ENCODE measurements at regions of chr12 and their contacts with region 1.

Region 1: DNA sequence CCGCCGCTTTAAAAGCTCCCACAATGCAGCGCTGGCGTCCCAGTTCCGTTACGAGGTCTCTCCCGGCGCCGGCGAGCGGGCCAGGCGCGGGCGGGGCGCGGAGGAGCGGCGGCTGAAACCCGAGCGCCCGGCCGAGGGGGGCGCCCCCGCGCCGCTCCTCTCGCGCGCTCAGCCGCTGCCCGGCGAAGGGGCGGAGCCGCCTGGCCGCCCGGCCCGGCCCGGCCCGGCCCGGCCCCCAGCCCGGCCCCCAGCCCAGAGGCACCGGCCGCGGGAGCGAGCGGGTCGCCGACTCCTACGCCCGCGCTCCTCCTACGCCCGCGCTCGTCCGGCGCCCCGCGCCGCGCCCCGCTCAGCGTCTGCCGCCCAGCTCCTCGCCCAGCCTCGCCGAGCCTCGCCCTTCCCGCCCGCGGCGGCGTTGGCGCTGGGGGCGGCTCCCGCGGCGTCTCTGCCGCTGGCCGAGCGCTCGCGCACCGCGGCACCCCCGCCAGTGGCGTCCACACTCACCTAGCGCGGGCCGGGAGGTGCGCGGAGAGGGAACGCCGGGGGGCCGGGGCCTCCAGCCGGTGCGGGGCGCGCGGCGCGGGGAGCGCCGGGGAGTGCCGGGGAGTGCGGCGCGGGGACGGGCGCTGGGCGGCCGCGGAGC is at the start of gene RASSF8:
- DNase-seq: peak; percentile 40 to 65
- ATAC-seq: peak; percentile 84 to 88
- H3K4me3 ChIP-seq: peak within 1 kb of the TSS; percentile 83 to 92 (median 89)
- H3K27ac ChIP-seq: peak within 1 kb of the TSS; percentile 86 to 95 (median 94)
- H3K4me1 ChIP-seq: peaks cover 24 to 34% of the 10 kb centered on the region in 2 donors
- H3K27me3 ChIP-seq: no peaks in the 10 kb centered on the region
- CTCF ChIP-seq: no peak
- POLR2A ChIP-seq: peak; percentile 83 to 90
- total RNA-seq, gene RASSF8: 23.6 to 36.8 (median 28.0) TPM

Region 2: GRCh38 chr12:26017484-26018206 is 59.1 kb after region 1 on chr12:
- in situ Hi-C with region 1: loop called in 2 of 4 experiments (anchors 5 kb)
- intact Hi-C with region 1: loop called (anchors 1 kb)
- DNase-seq: no peak
- ATAC-seq: no peak
- H3K4me3 ChIP-seq: no peak overlapping the region
- H3K27ac ChIP-seq: no peak overlapping the region
- H3K4me1 ChIP-seq: peaks cover 6 to 39% of the 10 kb centered on the region in 2 donors
- H3K27me3 ChIP-seq: no peaks in the 10 kb centered on the region
- CTCF ChIP-seq: peak; percentile 42 to 70 (median 57)
- POLR2A ChIP-seq: no peak

Region 3: GRCh38 chr12:26028953-26029735 is 70.6 kb after region 1 on chr12:
- in situ Hi-C with region 1: loop called in 1 of 4 experiments (anchors 5 kb)
- intact Hi-C with region 1: loop called (anchors 2 kb)
- DNase-seq: no peak
- ATAC-seq: peak; percentile 70 to 76
- H3K4me3 ChIP-seq: no peak overlapping the region
- H3K27ac ChIP-seq: peak overlapping the region in 1 of 4 donors; percentile 27
- H3K4me1 ChIP-seq: peaks cover 23 to 39% of the 10 kb centered on the region in 2 donors
- H3K27me3 ChIP-seq: no peaks in the 10 kb centered on the region
- CTCF ChIP-seq: peak; percentile 62 to 87 (median 68)
- POLR2A ChIP-seq: no peak

Region 4: GRCh38 chr12:26113853-26114719 is 155.5 kb after region 1 on chr12:
- in situ Hi-C with region 1: no loop called
- intact Hi-C with region 1: loop called (anchors 5 kb)
- DNase-seq: peak; percentile 94 to 98
- ATAC-seq: peak; percentile 53 to 63
- H3K4me3 ChIP-seq: peak overlapping the region; percentile 46 to 61 (median 50)
- H3K27ac ChIP-seq: peak overlapping the region; percentile 95 to 100 (median 97)
- H3K4me1 ChIP-seq: peaks cover 80 to 84% of the 10 kb centered on the region in 2 donors
- H3K27me3 ChIP-seq: no peaks in the 10 kb centered on the region
- CTCF ChIP-seq: peak; percentile 11 to 53 (median 38)
- POLR2A ChIP-seq: peak; percentile 89 to 96

Region 5: GRCh38 chr12:26195641-26196420 is 237.3 kb after region 1 on chr12:
- in situ Hi-C with region 1: no loop called
- intact Hi-C with region 1: loop called (anchors 10 kb)
- DNase-seq: peak; percentile 39 to 69
- ATAC-seq: peak; percentile 74
- H3K4me3 ChIP-seq: peak overlapping the region; percentile 69 to 91 (median 76)
- H3K27ac ChIP-seq: peak overlapping the region; percentile 84 to 94 (median 92)
- H3K4me1 ChIP-seq: peaks cover 31 to 35% of the 10 kb centered on the region in 2 donors
- H3K27me3 ChIP-seq: no peaks in the 10 kb centered on the region
- CTCF ChIP-seq: no peak
- POLR2A ChIP-seq: peak; percentile 22 to 32

Measured in gastrocnemius medialis (tissue), 4 donors.